Naive thymus-derived CD4-positive, alpha-beta T cell (primary cell): ENCODE measurements at regions of chr2 and their contacts with region 1.

Region 1: GRCh38 chr2:143440411-143441012 is 311.3 kb downstream of the ARHGAP15 start:
- DNase-seq: no peak
- ATAC-seq: no peak
- H3K4me3 ChIP-seq: no peak overlapping the region
- H3K4me3 Mint-ChIP-seq: no peak overlapping the region
- H3K27ac ChIP-seq: no peak overlapping the region
- H3K27ac Mint-ChIP-seq: peak overlapping the region in 6 of 9 donors; percentile 4 to 71 (median 28)
- H3K4me1 ChIP-seq: no peaks in the 10 kb centered on the region
- H3K4me1 Mint-ChIP-seq: peaks cover 5 to 26% (median 16%) of the 10 kb centered on the region in 7 donors
- H3K27me3 ChIP-seq: no peaks in the 10 kb centered on the region
- H3K27me3 Mint-ChIP-seq: no peaks in the 10 kb centered on the region

Region 2: DNA sequence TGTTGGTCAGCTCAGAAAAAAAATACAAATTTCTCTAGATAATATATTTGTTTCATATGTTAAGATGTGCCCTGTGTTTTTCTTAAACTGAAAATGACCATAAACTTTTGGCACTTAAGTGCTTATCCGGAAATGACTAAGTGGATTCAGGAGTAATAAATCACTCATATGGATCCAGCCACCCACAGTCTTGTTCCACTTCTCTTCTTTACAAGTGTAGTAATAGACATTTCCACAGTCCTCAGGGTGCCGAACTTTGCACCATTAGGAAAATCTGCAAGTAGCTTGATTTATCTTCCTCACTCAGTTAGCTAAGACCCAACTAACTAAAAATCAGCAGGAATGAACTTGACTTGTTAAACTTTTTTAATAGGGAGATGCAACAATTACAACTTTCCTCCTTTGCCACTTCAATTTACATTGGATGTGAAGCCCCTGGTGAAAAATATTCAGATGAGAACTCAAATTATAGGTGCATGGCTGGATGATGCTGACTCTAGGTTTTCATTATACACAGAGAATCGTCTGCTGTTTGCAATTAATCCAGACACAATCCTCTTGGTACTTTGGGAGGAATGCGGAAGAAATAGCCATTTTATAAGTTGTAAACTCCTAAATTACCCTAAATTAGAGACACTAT is 11.2 kb after region 1 on chr2:
- CTCF ChIA-PET with region 1: no interaction called
- POLR2A ChIA-PET with region 1: interaction called, 3 read pairs
- intact Hi-C with region 1: loop called in 1 of 2 experiments (anchors 1 kb)
- DNase-seq: no peak
- ATAC-seq: no peak
- H3K4me3 ChIP-seq: no peak overlapping the region
- H3K4me3 Mint-ChIP-seq: peak overlapping the region in 3 of 10 donors; percentile 7 to 44 (median 34)
- H3K27ac ChIP-seq: no peak overlapping the region
- H3K27ac Mint-ChIP-seq: peak overlapping the region in 3 of 9 donors; percentile 1 to 34 (median 23)
- H3K4me1 ChIP-seq: peaks cover 10 to 16% of the 10 kb centered on the region in 2 donors
- H3K4me1 Mint-ChIP-seq: peaks cover 22 to 78% (median 50%) of the 10 kb centered on the region in 7 donors
- H3K27me3 ChIP-seq: no peaks in the 10 kb centered on the region
- H3K27me3 Mint-ChIP-seq: no peaks in the 10 kb centered on the region

Region 3: DNA sequence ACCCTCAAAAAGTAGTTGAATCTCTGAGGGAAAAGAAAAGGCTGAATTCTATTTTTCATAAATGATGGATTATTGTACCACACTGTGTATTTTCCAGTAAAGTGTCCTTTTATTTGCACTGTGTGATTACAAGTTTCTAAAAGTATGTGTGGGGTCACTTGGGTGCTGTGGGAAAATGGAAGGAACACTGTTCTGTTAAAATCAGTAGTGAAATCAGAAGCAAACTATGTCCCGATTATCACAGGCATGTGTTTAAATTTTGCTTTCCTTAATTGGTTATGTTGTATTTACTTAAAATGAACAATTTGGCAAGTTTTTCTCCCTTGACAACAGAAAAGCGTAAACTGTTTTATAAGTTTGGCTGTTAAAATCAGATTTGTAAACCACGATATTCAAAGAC is 41.8 kb after region 1 on chr2:
- CTCF ChIA-PET with region 1: no interaction called
- POLR2A ChIA-PET with region 1: no interaction called
- intact Hi-C with region 1: no loop called
- DNase-seq: no peak
- ATAC-seq: no peak
- H3K4me3 ChIP-seq: no peak overlapping the region
- H3K4me3 Mint-ChIP-seq: no peak overlapping the region
- H3K27ac ChIP-seq: no peak overlapping the region
- H3K27ac Mint-ChIP-seq: peak overlapping the region in 2 of 9 donors; percentile 3 to 43
- H3K4me1 ChIP-seq: no peaks in the 10 kb centered on the region
- H3K4me1 Mint-ChIP-seq: peaks cover 3 to 49% (median 21%) of the 10 kb centered on the region in 7 donors
- H3K27me3 ChIP-seq: no peaks in the 10 kb centered on the region
- H3K27me3 Mint-ChIP-seq: no peaks in the 10 kb centered on the region